Ovary (tissue), 10 donors: ENCODE measurements at regions of chr1 and their contacts with region 1.

Region 1: GRCh38 chr1:98426092-98426491 is 235.4 kb upstream of the SNX7 start:
- DNase-seq: no peak
- H3K4me3 ChIP-seq: no peak overlapping the region
- H3K27ac ChIP-seq: no peak overlapping the region
- H3K4me1 ChIP-seq: no peaks in the 10 kb centered on the region
- H3K27me3 ChIP-seq: no peaks in the 10 kb centered on the region
- CTCF ChIP-seq: no peak
- EP300 ChIP-seq: no peak
- POLR2A ChIP-seq: no peak

Region 2: GRCh38 chr1:98053471-98054366 is 372.4 kb before region 1 on chr1:
- intact Hi-C with region 1: no loop called
- DNase-seq: peak; percentile 32 to 68 (median 50)
- H3K4me3 ChIP-seq: peak overlapping the region; percentile 21
- H3K27ac ChIP-seq: no peak overlapping the region
- H3K4me1 ChIP-seq: peaks cover 3% of the 10 kb centered on the region
- H3K27me3 ChIP-seq: no peaks in the 10 kb centered on the region
- CTCF ChIP-seq: peak; percentile 44 to 78 (median 64)
- EP300 ChIP-seq: no peak
- POLR2A ChIP-seq: no peak

Region 3: DNA sequence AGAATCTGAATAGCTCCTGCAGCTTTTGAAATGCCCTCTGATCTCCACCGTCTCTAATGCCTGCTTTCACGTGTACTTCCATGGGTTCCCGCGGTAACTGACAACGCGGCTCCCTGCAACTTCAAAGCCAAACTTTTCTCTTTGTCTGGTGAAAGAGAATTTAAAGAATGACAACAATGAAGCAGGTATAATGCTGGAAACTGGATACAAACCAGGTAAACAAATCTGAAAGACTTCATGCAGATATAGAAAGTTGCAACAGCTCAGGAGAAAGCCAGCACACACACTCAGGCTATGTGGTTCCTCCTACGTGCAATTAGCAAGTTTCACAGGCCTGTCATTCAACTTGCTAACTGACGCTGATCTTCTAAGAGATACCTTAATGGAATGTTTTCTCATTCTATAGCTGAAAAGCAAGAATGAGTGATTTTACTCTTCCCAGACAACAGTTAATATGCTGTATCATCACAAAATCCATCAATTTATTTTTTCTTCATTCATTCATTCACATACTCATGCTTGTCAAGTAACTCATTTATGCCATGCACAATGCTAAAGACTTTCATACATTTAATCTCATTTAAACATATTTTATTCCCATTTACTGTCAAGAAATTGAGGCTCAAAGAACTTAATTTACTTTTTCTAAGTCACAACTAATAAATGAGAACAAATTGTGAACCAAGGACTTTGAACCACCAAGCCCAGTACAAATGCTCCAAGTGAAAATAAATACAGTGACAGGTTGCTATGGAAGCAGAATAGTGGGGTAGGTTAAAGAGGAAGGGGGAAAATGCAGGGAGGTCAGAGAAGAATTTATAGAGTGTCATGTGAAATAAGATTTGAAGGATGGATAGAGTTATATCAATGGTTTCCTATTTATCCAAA is 32.8 kb after region 1 on chr1:
- intact Hi-C with region 1: loop called in 1 of 4 experiments (anchors 2 kb)
- DNase-seq: no peak
- H3K4me3 ChIP-seq: no peak overlapping the region
- H3K27ac ChIP-seq: no peak overlapping the region
- H3K4me1 ChIP-seq: no peaks in the 10 kb centered on the region
- H3K27me3 ChIP-seq: no peaks in the 10 kb centered on the region
- CTCF ChIP-seq: no peak
- EP300 ChIP-seq: no peak
- POLR2A ChIP-seq: no peak

Region 4: GRCh38 chr1:98644510-98644909 is 218.4 kb after region 1 on chr1:
- intact Hi-C with region 1: no loop called
- DNase-seq: no peak
- H3K4me3 ChIP-seq: no peak overlapping the region
- H3K27ac ChIP-seq: no peak overlapping the region
- H3K4me1 ChIP-seq: no peaks in the 10 kb centered on the region
- H3K27me3 ChIP-seq: no peaks in the 10 kb centered on the region
- CTCF ChIP-seq: no peak
- EP300 ChIP-seq: no peak
- POLR2A ChIP-seq: no peak